IMR-90 (cell line): ENCODE measurements at regions of chr2 and their contacts with region 1.

Region 1: GRCh38 chr2:109386004-109386695 is 227.6 kb downstream of the SEPTIN10 start:
- DNase-seq: peak; percentile 56
- ATAC-seq: peak; percentile 62
- H3K4me3 ChIP-seq: no peak overlapping the region
- H3K27ac ChIP-seq: peak overlapping the region; percentile 56; the same call in 1 of the 2 replicates
- H3K4me1 ChIP-seq: peaks cover 24% of the 10 kb centered on the region
- H3K27me3 ChIP-seq: no peaks in the 10 kb centered on the region
- CTCF ChIP-seq: 0 out of 2 replicates have a peak, but pooled peaks have one; percentile 22
- POLR2A ChIP-seq: no peak
- RAD21 ChIP-seq: no peak

Region 2: DNA sequence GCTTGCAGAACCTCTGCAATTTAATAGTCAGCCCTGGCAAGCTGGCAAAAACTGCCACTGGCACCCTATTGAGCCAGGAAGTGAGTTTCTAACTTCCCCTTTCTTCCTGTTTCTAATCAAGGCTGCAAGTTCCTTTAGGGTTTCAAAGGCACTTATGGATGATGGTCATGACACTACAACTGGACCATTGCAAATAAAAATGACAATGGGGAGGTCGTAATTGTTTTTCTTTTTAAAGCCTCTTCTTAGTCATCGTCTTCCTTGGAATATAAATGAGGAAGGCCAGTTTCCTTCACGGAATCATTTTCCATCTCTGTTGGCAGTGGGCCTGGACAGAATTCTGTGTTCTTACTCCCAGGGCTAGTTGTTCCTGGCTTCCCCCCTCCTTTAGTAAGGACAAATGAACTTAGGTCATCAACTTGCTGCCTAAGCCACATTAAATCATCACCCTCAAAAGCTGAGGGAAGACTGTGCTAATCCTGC is 221.4 kb before region 1 on chr2:
- CTCF ChIA-PET with region 1: no interaction called
- POLR2A ChIA-PET with region 1: no interaction called
- dilution Hi-C with region 1: no loop called
- in situ Hi-C with region 1: no loop called
- intact Hi-C with region 1: no loop called
- DNase-seq: peak; percentile 78
- ATAC-seq: peak; percentile 30; the same call in 1 of the 2 replicates
- H3K4me3 ChIP-seq: no peak overlapping the region
- H3K27ac ChIP-seq: peak overlapping the region; percentile 72
- H3K4me1 ChIP-seq: peaks cover 30% of the 10 kb centered on the region
- H3K27me3 ChIP-seq: no peaks in the 10 kb centered on the region
- CTCF ChIP-seq: no peak
- POLR2A ChIP-seq: no peak
- RAD21 ChIP-seq: no peak

Region 3: DNA sequence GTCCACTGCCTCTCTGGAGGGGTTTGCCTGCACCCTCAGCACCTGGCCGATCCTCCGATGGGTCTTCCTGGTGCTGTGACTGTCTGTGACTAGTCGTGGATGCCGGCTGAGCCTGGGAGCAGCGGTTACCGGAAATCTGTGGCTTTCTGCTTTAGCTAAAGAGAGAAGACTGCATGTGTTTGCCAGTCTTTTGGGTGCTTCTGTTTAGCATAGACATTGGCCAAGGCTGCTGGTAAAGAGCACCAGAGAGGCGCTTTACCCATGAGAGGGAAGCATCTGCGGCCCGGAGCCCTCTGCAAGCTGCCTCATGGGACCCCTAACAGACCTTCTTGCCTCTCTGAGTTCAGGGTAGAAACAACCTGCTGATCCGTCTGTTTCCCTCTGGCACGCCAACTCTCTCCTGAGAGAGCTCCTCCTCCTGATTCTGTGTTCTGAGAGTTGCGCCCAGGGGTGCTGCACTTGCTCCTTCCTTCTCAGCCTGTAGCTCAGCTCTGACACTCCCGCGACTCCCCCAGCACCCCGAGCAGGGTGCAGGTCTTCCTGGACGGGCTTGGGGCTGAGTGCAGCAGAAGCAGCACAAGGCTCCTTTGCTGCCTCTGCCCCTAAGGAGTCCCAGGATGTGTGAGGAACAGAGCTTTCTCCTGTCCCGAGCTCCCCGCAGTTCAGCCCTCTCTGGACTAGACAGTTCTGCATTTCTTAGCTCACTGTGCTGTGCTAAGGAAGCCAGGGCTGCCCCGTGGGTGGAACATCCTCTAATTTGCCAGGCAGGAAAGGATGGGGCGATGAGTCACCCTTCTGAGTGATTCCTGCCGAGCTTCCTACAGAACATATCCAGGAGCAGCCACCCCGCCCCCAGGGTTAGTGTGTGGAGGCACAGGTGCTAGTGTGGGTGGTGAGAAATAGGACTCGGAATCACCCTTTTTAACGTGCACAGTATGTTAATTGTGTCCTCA is 54.0 kb before region 1 on chr2:
- CTCF ChIA-PET with region 1: no interaction called
- POLR2A ChIA-PET with region 1: no interaction called
- dilution Hi-C with region 1: no loop called
- in situ Hi-C with region 1: no loop called
- intact Hi-C with region 1: loop called (anchors 5 kb)
- DNase-seq: peak; percentile 96
- ATAC-seq: peak; percentile 84
- H3K4me3 ChIP-seq: no peak overlapping the region
- H3K27ac ChIP-seq: peak overlapping the region; percentile 87
- H3K4me1 ChIP-seq: peaks cover 46% of the 10 kb centered on the region
- H3K27me3 ChIP-seq: no peaks in the 10 kb centered on the region
- CTCF ChIP-seq: no peak
- POLR2A ChIP-seq: peak; percentile 74
- RAD21 ChIP-seq: peak; percentile 33; the same call in 1 of the 2 replicates